Naive thymus-derived CD8-positive, alpha-beta T cell (primary cell): ENCODE measurements at regions of chr1 and their contacts with region 1.

Region 1: DNA sequence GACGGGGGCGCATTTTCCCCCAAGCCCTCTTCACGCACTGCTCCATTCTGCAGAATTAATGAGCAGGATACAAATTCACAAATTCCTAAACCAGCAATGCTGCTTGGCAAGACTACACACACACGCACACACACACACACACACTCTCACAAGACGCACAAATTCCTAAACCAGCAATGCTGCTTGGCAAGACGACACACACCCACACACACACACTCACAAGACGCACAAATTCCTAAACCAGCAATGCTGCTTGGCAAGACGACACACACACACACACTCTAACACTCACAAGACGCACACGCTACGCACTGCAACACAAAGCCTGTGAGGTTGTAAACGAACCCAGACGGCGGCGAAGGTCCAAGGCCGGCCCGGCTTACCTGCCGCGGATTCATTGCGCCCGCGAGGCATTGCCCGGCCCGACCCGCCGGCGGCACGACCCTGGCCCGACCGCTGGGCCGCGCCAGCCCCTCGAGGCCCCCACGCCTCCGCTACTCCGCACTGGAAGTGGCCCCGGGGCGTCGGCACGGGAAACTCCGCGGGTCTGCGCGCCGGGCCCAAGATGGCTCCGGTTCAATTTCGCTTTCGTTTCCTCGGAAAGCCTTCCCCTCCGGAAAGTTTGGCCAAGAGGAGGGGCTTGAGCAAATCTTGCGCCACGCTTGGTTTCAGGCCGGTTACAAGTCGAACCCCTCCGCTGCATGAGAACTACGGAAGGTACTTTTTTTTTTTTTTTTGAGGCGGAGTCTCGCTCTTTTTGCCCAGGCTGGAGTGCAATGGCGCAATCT is at the start of gene ADAR:
- DNase-seq: peak; percentile 72 to 95 (median 89)
- ATAC-seq: peak; percentile 78 to 84
- H3K4me3 Mint-ChIP-seq: peak within 1 kb of the TSS; percentile 93 to 100 (median 97)
- H3K27ac Mint-ChIP-seq: peak within 1 kb of the TSS; percentile 96 to 100 (median 98)
- H3K4me1 Mint-ChIP-seq: peaks cover 43 to 85% (median 76%) of the 10 kb centered on the region in 4 donors
- H3K27me3 Mint-ChIP-seq: no peaks in the 10 kb centered on the region
- polyA plus RNA-seq, gene ADAR: 93.2 to 132 (median 115) TPM

Region 2: GRCh38 chr1:154627257-154628120 is 19.7 kb after region 1 on chr1:
- POLR2A ChIA-PET with region 1: interaction called, 63 read pairs
- DNase-seq: peak; percentile 74 to 96 (median 92)
- ATAC-seq: peak; percentile 76
- H3K4me3 Mint-ChIP-seq: peak overlapping the region; percentile 84 to 100 (median 98)
- H3K27ac Mint-ChIP-seq: peak overlapping the region; percentile 92 to 100 (median 100)
- H3K4me1 Mint-ChIP-seq: peaks cover 18 to 49% (median 47%) of the 10 kb centered on the region in 4 donors
- H3K27me3 Mint-ChIP-seq: peaks cover 0 to 9% (median 3%) of the 10 kb centered on the region in 5 donors